Activated B cell treated with CpG ODN at 0.5 μM for 24 hours (primary cell): ENCODE measurements at regions of chr3 and their contacts with region 1.

Region 1: GRCh38 chr3:354432-354831 is 157.9 kb downstream of the CHL1 start:
- DNase-seq: no peak
- ATAC-seq: peak; percentile 49
- H3K4me3 Mint-ChIP-seq: no peak overlapping the region
- H3K27ac Mint-ChIP-seq: no peak overlapping the region
- H3K4me1 Mint-ChIP-seq: peaks cover 22% of the 10 kb centered on the region
- H3K27me3 Mint-ChIP-seq: no peaks in the 10 kb centered on the region
- CTCF ChIP-seq: peak; percentile 22

Region 2: GRCh38 chr3:46576-46975 is 307.9 kb before region 1 on chr3:
- CTCF ChIA-PET with region 1: interaction called, 241 read pairs
- POLR2A ChIA-PET with region 1: interaction called, 4 read pairs
- intact Hi-C with region 1: loop called (anchors 1 kb)
- DNase-seq: no peak
- ATAC-seq: no peak
- H3K4me3 Mint-ChIP-seq: no peak overlapping the region
- H3K27ac Mint-ChIP-seq: no peak overlapping the region
- H3K4me1 Mint-ChIP-seq: no peaks in the 10 kb centered on the region
- H3K27me3 Mint-ChIP-seq: no peaks in the 10 kb centered on the region
- CTCF ChIP-seq: no peak

Region 3: GRCh38 chr3:192215-192929 is 162.1 kb before region 1 on chr3:
- CTCF ChIA-PET with region 1: interaction called, 3 read pairs
- POLR2A ChIA-PET with region 1: interaction called, 3 read pairs
- intact Hi-C with region 1: loop called (anchors 2 kb)
- DNase-seq: no peak
- ATAC-seq: peak; percentile 71
- H3K4me3 Mint-ChIP-seq: peak overlapping the region; percentile 50
- H3K27ac Mint-ChIP-seq: peak overlapping the region; percentile 79
- H3K4me1 Mint-ChIP-seq: peaks cover 13% of the 10 kb centered on the region
- H3K27me3 Mint-ChIP-seq: peaks cover 9% of the 10 kb centered on the region
- CTCF ChIP-seq: no peak

Region 4: DNA sequence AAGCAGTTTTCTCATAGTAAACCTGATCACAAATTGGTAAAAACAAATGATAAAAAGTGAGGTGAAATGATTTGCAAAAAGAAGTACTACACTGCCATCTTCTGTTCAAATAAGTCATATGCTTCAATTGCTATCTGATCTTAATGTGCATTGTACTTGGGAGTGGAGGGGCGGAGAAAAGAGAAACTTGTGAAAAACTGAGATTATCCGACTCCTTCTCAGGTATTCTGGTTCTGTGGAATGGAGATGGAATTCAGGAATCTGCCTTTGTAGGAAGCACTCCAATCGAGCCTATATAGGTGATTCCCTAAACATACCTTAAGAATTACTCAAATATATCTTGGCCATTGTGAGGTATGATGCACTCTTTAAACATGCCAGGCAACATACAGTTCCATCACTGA is 22.7 kb after region 1 on chr3:
- CTCF ChIA-PET with region 1: interaction called, 21 read pairs
- POLR2A ChIA-PET with region 1: no interaction called
- intact Hi-C with region 1: loop called (anchors 1 kb)
- DNase-seq: no peak
- ATAC-seq: peak; percentile 52
- H3K4me3 Mint-ChIP-seq: no peak overlapping the region
- H3K27ac Mint-ChIP-seq: no peak overlapping the region
- H3K4me1 Mint-ChIP-seq: peaks cover 2% of the 10 kb centered on the region
- H3K27me3 Mint-ChIP-seq: peaks cover 3% of the 10 kb centered on the region
- CTCF ChIP-seq: no peak